ENCODE measurements at regions of chr10 and their contacts with region 1.

Region 1: GRCh38 chr10:329361-330099 is 194.3 kb downstream of the ZMYND11 start:
- DNase-seq: peak in 6 of 9 experiments; percentile 28 to 66 (median 44)
- ATAC-seq: peak; percentile 48
- H3K4me3 ChIP-seq: no peak overlapping the region
- H3K4me3 Mint-ChIP-seq: peak overlapping the region; percentile 82
- H3K27ac ChIP-seq: no peak overlapping the region
- H3K27ac Mint-ChIP-seq: peak overlapping the region; percentile 95
- H3K4me1 ChIP-seq: peaks cover 32% of the 10 kb centered on the region
- H3K4me1 Mint-ChIP-seq: peaks cover 49% of the 10 kb centered on the region
- H3K27me3 ChIP-seq: no peaks in the 10 kb centered on the region
- H3K27me3 Mint-ChIP-seq: no peaks in the 10 kb centered on the region
- CTCF ChIP-seq: no peak

Region 2: GRCh38 chr10:135132-135600 is 194.4 kb before region 1 on chr10 and contains the start of gene ZMYND11:
- CTCF ChIA-PET with region 1: no interaction called
- POLR2A ChIA-PET with region 1: no interaction called
- intact Hi-C with region 1: loop called in 1 of 2 experiments (anchors 5 kb)
- DNase-seq: peak; percentile 46 to 84 (median 69)
- ATAC-seq: peak; percentile 49
- H3K4me3 ChIP-seq: peak within 1 kb of the TSS; percentile 56 to 80
- H3K4me3 Mint-ChIP-seq: peak within 1 kb of the TSS; percentile 92
- H3K27ac ChIP-seq: peak within 1 kb of the TSS; percentile 72 to 83
- H3K27ac Mint-ChIP-seq: peak within 1 kb of the TSS; percentile 94
- H3K4me1 ChIP-seq: peaks cover 28% of the 10 kb centered on the region
- H3K4me1 Mint-ChIP-seq: peaks cover 51% of the 10 kb centered on the region
- H3K27me3 ChIP-seq: no peaks in the 10 kb centered on the region
- H3K27me3 Mint-ChIP-seq: no peaks in the 10 kb centered on the region
- CTCF ChIP-seq: no peak
- total RNA-seq, gene ZMYND11: 19.8 to 19.9 TPM

Region 3: GRCh38 chr10:147752-148317 is 181.7 kb before region 1 on chr10:
- CTCF ChIA-PET with region 1: no interaction called
- POLR2A ChIA-PET with region 1: no interaction called
- intact Hi-C with region 1: no loop called
- DNase-seq: no peak
- ATAC-seq: no peak
- H3K4me3 ChIP-seq: no peak overlapping the region
- H3K4me3 Mint-ChIP-seq: no peak overlapping the region
- H3K27ac ChIP-seq: no peak overlapping the region
- H3K27ac Mint-ChIP-seq: no peak overlapping the region
- H3K4me1 ChIP-seq: peaks cover 4% of the 10 kb centered on the region
- H3K4me1 Mint-ChIP-seq: peaks cover 64% of the 10 kb centered on the region
- H3K27me3 ChIP-seq: no peaks in the 10 kb centered on the region
- H3K27me3 Mint-ChIP-seq: no peaks in the 10 kb centered on the region
- CTCF ChIP-seq: no peak

Region 4: DNA sequence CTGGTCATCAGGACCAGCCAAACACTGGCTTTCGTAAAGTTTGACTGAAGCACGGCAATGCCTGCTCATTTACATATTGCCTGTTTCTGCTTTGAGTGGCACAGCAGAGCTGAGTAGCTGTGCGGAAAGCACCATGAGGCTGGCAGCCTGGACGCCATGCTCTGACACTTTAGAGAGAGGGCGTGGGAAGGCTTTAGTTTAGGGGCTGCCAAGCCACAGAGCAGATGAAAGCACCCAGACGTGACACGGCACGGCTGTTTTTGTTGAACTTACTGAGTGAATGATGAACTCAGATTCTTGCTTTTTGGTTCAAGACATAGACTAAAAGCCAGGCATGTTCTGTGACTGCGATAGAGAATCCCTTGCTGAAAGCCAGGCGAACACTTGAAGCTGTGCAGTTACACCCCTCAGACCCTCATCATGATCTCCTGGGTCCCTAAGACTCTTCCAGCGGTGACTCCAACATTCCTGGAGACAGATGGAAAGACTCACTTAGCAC is 12.2 kb before region 1 on chr10:
- CTCF ChIA-PET with region 1: interaction called, 7 read pairs
- POLR2A ChIA-PET with region 1: interaction called, 6 read pairs
- intact Hi-C with region 1: loop called in 1 of 2 experiments (anchors 1 kb)
- DNase-seq: peak in 6 of 9 experiments; percentile 18 to 76 (median 65)
- ATAC-seq: peak; percentile 98
- H3K4me3 ChIP-seq: no peak overlapping the region
- H3K4me3 Mint-ChIP-seq: peak overlapping the region; percentile 30
- H3K27ac ChIP-seq: no peak overlapping the region
- H3K27ac Mint-ChIP-seq: peak overlapping the region; percentile 90
- H3K4me1 ChIP-seq: peaks cover 28% of the 10 kb centered on the region
- H3K4me1 Mint-ChIP-seq: peaks cover 32% of the 10 kb centered on the region
- H3K27me3 ChIP-seq: no peaks in the 10 kb centered on the region
- H3K27me3 Mint-ChIP-seq: no peaks in the 10 kb centered on the region
- CTCF ChIP-seq: no peak

Region 5: DNA sequence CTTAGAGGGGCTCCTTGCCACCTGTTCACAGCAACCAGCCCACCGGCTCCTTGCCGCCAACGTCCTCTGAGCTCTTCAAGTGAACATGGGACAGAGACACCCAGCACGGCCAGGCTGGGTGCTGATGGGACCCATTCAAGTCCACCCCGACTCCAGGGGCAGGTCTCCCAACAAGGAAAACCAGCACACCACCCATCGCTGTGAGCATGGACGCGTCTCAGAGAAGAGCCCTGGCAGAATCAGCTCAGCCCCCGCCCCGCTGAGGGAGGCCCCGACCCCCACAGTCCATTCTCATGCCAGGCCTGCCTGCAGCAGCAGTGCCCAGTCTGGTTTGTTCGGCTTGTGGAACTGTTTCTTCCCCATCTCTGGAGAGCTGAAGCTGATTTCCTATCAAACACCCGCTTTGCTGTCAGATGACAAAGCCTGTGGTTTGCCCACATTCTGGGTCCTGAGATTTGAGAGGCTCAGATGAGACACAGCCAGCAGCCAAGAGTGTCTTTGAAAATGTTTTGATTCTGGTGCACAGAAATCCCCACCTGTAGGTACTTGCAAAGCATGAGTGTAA is 22.3 kb after region 1 on chr10:
- CTCF ChIA-PET with region 1: no interaction called
- POLR2A ChIA-PET with region 1: interaction called, 6 read pairs
- intact Hi-C with region 1: loop called in 1 of 2 experiments (anchors 2 kb)
- DNase-seq: peak in 8 of 9 experiments; percentile 14 to 78 (median 54)
- ATAC-seq: peak; percentile 88
- H3K4me3 ChIP-seq: no peak overlapping the region
- H3K4me3 Mint-ChIP-seq: peak overlapping the region; percentile 72
- H3K27ac ChIP-seq: peak overlapping the region in 1 of 2 experiments; percentile 10
- H3K27ac Mint-ChIP-seq: peak overlapping the region; percentile 88
- H3K4me1 ChIP-seq: peaks cover 17% of the 10 kb centered on the region
- H3K4me1 Mint-ChIP-seq: peaks cover 25% of the 10 kb centered on the region
- H3K27me3 ChIP-seq: no peaks in the 10 kb centered on the region
- H3K27me3 Mint-ChIP-seq: no peaks in the 10 kb centered on the region
- CTCF ChIP-seq: no peak

Region 6: GRCh38 chr10:511101-511848 is 181.7 kb after region 1 on chr10:
- CTCF ChIA-PET with region 1: no interaction called
- POLR2A ChIA-PET with region 1: no interaction called
- intact Hi-C with region 1: no loop called
- DNase-seq: peak; percentile 51 to 88 (median 75)
- ATAC-seq: peak; percentile 85
- H3K4me3 ChIP-seq: no peak overlapping the region
- H3K4me3 Mint-ChIP-seq: no peak overlapping the region
- H3K27ac ChIP-seq: no peak overlapping the region
- H3K27ac Mint-ChIP-seq: no peak overlapping the region
- H3K4me1 ChIP-seq: peaks cover 11% of the 10 kb centered on the region
- H3K4me1 Mint-ChIP-seq: peaks cover 14% of the 10 kb centered on the region
- H3K27me3 ChIP-seq: no peaks in the 10 kb centered on the region
- H3K27me3 Mint-ChIP-seq: peaks cover 6% of the 10 kb centered on the region
- CTCF ChIP-seq: peak; percentile 94